MCF 10A (cell line): ENCODE measurements at regions of chr2 and their contacts with region 1.

Region 1: GRCh38 chr2:190607014-190607597 is 41.8 kb upstream of the NAB1 start:
- DNase-seq: peak; percentile 89
- H3K4me3 Mint-ChIP-seq: peak overlapping the region; percentile 56
- H3K27ac Mint-ChIP-seq: peak overlapping the region; percentile 81
- H3K4me1 Mint-ChIP-seq: peaks cover 63% of the 10 kb centered on the region
- H3K27me3 Mint-ChIP-seq: no peaks in the 10 kb centered on the region
- CTCF ChIP-seq: no peak

Region 2: DNA sequence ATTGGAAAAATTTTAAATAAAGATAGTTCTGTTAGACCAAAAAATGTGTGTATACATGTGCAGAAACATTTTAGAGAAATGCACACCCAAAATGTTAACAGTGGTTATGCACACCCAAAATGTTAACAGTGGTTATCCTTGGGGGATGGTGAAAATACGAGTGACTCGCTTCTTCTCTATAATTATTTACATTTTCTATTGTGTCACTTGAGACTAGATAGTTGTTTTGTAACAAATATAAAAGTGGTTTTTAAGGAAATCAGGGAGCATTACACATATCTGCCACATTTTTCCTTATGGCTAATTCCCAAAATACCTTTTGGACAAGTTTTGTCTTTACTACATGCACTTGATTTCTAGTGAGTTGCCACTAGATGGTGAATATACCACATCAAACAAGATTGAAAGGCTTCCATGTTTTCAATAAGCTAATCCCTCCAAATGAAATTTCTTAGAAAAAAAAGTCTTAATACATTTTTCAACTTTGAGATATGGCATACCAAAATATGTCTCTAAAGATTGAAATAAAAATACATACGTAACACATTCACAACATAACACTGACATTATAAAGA is 278.4 kb before region 1 on chr2:
- CTCF ChIA-PET with region 1: no interaction called
- POLR2A ChIA-PET with region 1: no interaction called
- intact Hi-C with region 1: no loop called
- DNase-seq: no peak
- H3K4me3 Mint-ChIP-seq: no peak overlapping the region
- H3K27ac Mint-ChIP-seq: no peak overlapping the region
- H3K4me1 Mint-ChIP-seq: no peaks in the 10 kb centered on the region
- H3K27me3 Mint-ChIP-seq: no peaks in the 10 kb centered on the region
- CTCF ChIP-seq: peak; percentile 15

Region 3: GRCh38 chr2:190571686-190572085 is 35.4 kb before region 1 on chr2:
- CTCF ChIA-PET with region 1: interaction called, 4 read pairs
- POLR2A ChIA-PET with region 1: interaction called, 54 read pairs
- intact Hi-C with region 1: no loop called
- DNase-seq: peak; percentile 43
- H3K4me3 Mint-ChIP-seq: no peak overlapping the region
- H3K27ac Mint-ChIP-seq: peak overlapping the region; percentile 77
- H3K4me1 Mint-ChIP-seq: peaks cover 41% of the 10 kb centered on the region
- H3K27me3 Mint-ChIP-seq: no peaks in the 10 kb centered on the region
- CTCF ChIP-seq: no peak

Region 4: DNA sequence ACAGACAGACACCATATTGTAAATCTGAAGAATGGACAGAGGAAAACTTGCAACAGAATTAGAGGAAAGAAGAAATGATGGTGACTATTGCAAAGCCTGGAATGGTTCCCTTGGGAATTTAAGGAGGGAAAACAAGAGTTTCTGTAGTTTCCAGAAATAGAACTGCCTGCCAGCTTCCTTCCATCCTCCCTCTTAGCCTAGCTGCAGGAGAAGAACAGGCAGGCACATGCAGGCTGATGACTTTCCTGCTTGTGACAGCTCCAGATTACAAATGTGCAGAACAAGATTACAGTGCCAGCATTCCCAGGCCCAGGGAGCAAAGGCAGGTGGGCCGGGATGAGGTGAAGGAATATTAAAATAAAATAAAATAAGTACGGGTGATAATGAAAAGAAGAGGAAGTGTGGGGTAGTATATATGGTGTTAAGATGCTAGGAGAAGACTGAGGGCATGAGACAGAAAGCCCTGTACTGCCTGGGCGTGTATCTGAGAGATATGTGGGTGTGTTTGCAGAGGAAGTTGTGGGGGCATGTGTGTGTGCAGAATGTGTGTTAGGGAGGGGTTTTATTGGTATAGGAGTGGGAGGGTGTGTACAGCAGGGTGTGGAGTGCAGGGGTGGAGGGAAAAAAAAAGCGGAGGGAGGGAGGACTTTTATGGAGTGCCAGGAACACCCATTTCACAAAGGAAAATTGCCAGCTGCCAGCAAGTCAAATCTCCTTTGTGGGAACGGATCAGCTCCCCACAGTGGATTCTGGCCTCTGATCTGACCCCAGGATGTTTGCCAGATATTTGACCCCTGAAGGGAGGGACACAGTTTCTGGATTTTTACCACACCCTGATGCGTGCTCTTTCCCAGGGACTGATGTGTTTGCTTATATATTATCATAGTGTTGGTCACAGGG is 28.7 kb before region 1 on chr2:
- CTCF ChIA-PET with region 1: interaction called, 4 read pairs
- POLR2A ChIA-PET with region 1: interaction called, 69 read pairs
- intact Hi-C with region 1: loop called (anchors 2 kb)
- DNase-seq: peak; percentile 95
- H3K4me3 Mint-ChIP-seq: peak overlapping the region; percentile 60
- H3K27ac Mint-ChIP-seq: peak overlapping the region; percentile 81
- H3K4me1 Mint-ChIP-seq: peaks cover 53% of the 10 kb centered on the region
- H3K27me3 Mint-ChIP-seq: no peaks in the 10 kb centered on the region
- CTCF ChIP-seq: no peak

Region 5: DNA sequence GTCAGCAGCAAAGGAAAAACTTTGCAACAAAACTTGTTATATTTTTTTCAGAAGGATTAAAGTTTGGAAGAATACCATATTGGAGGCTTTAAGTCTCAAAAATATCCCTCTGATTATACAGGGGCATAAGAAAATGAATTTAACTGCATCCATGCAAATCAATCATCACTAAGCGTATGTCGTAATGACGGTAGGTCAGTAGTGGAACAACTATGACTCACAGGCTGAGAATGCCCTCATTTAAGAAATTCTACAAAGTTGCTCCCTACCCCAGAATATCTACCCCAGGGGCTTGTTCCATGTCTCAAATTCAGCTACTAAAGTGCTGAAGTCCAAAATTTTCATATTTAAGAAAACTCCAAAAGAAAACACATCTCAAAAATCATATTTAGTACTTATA is 29.3 kb after region 1 on chr2:
- CTCF ChIA-PET with region 1: interaction called, 3 read pairs
- POLR2A ChIA-PET with region 1: interaction called, 78 read pairs
- intact Hi-C with region 1: no loop called
- DNase-seq: peak; percentile 83
- H3K4me3 Mint-ChIP-seq: no peak overlapping the region
- H3K27ac Mint-ChIP-seq: peak overlapping the region; percentile 80
- H3K4me1 Mint-ChIP-seq: peaks cover 50% of the 10 kb centered on the region
- H3K27me3 Mint-ChIP-seq: no peaks in the 10 kb centered on the region
- CTCF ChIP-seq: no peak

Region 6: DNA sequence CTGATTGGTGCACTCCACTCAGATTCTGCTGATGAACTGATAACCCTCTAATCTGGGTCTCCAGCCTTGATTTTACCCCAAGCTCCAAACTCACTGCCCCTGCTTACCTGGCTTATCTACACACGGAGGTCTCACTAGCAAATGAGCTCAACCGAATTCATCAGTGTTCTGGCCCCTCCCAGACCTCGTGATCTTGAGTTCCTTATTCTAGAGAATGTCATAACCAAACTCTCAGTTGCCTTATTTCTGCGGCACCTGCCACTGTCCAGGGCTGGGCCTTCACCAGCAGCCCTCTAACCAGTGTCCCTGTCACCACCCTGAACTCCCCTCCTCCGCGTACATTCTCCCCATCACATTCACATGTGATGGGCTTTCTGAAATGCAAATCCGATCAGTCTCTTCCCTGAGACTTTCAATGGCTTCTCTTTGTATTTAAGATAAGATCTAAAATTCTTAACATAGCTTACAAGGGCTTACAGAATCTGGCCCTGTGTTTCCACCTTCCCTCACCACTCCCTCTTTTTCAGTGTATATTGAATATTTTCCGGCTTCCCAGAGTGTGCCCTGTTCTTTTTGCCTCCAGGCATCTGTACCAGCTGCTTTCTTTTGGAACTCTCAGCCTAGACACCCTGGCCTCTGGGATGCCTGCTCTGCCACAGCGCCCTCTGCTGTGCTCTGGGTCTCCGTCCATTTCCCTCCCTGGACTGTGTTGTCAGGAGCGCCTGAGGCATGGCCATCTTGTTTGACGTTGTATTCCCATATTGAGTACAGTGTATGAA is 72.9 kb after region 1 on chr2:
- CTCF ChIA-PET with region 1: no interaction called
- POLR2A ChIA-PET with region 1: interaction called, 4 read pairs
- intact Hi-C with region 1: loop called (anchors 1 kb)
- DNase-seq: peak; percentile 95
- H3K4me3 Mint-ChIP-seq: peak overlapping the region; percentile 12
- H3K27ac Mint-ChIP-seq: peak overlapping the region; percentile 50
- H3K4me1 Mint-ChIP-seq: peaks cover 18% of the 10 kb centered on the region
- H3K27me3 Mint-ChIP-seq: no peaks in the 10 kb centered on the region
- CTCF ChIP-seq: peak; percentile 86